CD8-positive, alpha-beta T cell (primary cell): ENCODE measurements at regions of chr18 and their contacts with region 1.

Region 1: GRCh38 chr18:38415811-38416210 is 850.2 kb upstream of the CELF4 start:
- DNase-seq: no peak
- ATAC-seq: no peak
- H3K4me3 ChIP-seq: no peak overlapping the region
- H3K4me3 Mint-ChIP-seq: no peak overlapping the region
- H3K27ac ChIP-seq: no peak overlapping the region
- H3K27ac Mint-ChIP-seq: no peak overlapping the region
- H3K4me1 ChIP-seq: no peaks in the 10 kb centered on the region
- H3K4me1 Mint-ChIP-seq: no peaks in the 10 kb centered on the region
- H3K27me3 ChIP-seq: no peaks in the 10 kb centered on the region
- H3K27me3 Mint-ChIP-seq: no peaks in the 10 kb centered on the region
- CTCF ChIP-seq: no peak

Region 2: DNA sequence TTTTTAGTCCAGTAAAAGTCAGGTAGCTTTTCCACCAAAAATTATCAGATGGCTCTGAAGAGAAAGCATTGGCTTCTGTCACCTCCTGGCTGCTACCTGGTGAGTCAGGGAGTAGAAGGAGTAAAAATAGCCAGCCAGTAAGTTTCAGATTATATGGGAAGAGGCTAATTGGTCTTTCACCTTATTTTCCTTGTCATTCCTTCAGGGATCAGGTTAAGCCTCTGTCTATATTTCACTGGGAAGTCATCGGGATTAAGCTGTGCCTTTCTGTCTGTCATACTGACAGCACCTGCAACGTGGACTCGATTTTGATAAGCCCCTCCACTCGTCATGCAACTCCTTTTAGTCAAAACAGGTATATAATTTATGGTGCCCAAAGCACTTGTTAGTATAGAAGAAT is 469.5 kb before region 1 on chr18:
- CTCF ChIA-PET with region 1: no interaction called
- POLR2A ChIA-PET with region 1: no interaction called
- intact Hi-C with region 1: no loop called
- DNase-seq: no peak
- ATAC-seq: no peak
- H3K4me3 ChIP-seq: no peak overlapping the region
- H3K4me3 Mint-ChIP-seq: no peak overlapping the region
- H3K27ac ChIP-seq: no peak overlapping the region
- H3K27ac Mint-ChIP-seq: no peak overlapping the region
- H3K4me1 ChIP-seq: no peaks in the 10 kb centered on the region
- H3K4me1 Mint-ChIP-seq: no peaks in the 10 kb centered on the region
- H3K27me3 ChIP-seq: no peaks in the 10 kb centered on the region
- H3K27me3 Mint-ChIP-seq: no peaks in the 10 kb centered on the region
- CTCF ChIP-seq: no peak

Region 3: GRCh38 chr18:38466426-38466825 is 50.6 kb after region 1 on chr18:
- CTCF ChIA-PET with region 1: no interaction called
- POLR2A ChIA-PET with region 1: no interaction called
- intact Hi-C with region 1: loop called in 1 of 2 experiments (anchors 5 kb)
- DNase-seq: no peak
- ATAC-seq: no peak
- H3K4me3 ChIP-seq: no peak overlapping the region
- H3K4me3 Mint-ChIP-seq: no peak overlapping the region
- H3K27ac ChIP-seq: no peak overlapping the region
- H3K27ac Mint-ChIP-seq: no peak overlapping the region
- H3K4me1 ChIP-seq: no peaks in the 10 kb centered on the region
- H3K4me1 Mint-ChIP-seq: no peaks in the 10 kb centered on the region
- H3K27me3 ChIP-seq: no peaks in the 10 kb centered on the region
- H3K27me3 Mint-ChIP-seq: no peaks in the 10 kb centered on the region
- CTCF ChIP-seq: no peak

Region 4: GRCh38 chr18:39871961-39872360 is 1456.2 kb after region 1 on chr18:
- CTCF ChIA-PET with region 1: no interaction called
- POLR2A ChIA-PET with region 1: no interaction called
- intact Hi-C with region 1: no loop called
- DNase-seq: no peak
- ATAC-seq: no peak
- H3K4me3 ChIP-seq: no peak overlapping the region
- H3K4me3 Mint-ChIP-seq: no peak overlapping the region
- H3K27ac ChIP-seq: no peak overlapping the region
- H3K27ac Mint-ChIP-seq: no peak overlapping the region
- H3K4me1 ChIP-seq: no peaks in the 10 kb centered on the region
- H3K4me1 Mint-ChIP-seq: no peaks in the 10 kb centered on the region
- H3K27me3 ChIP-seq: no peaks in the 10 kb centered on the region
- H3K27me3 Mint-ChIP-seq: no peaks in the 10 kb centered on the region
- CTCF ChIP-seq: no peak